Spleen (tissue), 13 donors: ENCODE measurements at regions of chr18 and their contacts with region 1.

Region 1: DNA sequence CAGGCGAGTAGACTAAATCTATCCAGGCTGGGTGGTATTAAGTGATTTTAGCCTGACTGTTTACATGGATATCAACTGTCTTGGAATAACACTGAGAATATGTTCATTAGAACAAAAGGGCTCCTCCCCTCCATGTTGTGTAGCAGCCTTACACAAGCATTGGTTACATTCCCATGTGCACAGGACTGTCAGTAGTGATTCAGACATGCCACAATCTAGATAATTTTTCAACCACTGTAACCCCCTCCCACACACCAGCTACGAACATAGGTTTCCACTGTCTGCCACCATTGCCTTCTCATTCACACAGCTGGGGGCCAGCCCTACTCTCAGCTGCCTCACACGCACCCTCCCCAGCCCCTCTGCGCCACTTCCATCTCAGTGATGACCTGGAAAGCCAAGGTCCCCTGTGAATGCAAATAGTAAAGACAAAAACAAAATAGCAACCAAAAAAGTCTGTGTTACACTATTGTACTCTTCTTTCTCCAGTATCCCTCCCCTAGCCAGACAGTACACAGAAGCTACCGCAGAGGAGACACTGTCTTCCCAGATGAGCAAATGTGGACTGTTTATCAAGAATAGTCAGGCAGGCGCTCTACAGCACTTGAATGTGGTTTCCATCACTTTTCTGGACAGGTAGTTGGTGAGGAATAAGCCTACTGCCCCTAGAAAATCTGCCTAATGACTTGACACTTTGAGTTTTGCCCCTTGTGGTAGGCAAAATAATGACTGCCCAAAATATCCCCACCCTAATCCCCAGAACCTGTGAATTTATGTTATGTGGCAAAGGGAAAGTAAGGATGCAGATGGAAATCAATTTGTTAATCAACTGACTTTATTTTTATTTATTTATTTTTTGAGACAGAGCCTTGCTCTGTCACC is 27.9 kb upstream of the TYMS start:
- DNase-seq: no peak
- H3K4me3 ChIP-seq: no peak overlapping the region
- H3K27ac ChIP-seq: no peak overlapping the region
- H3K4me1 ChIP-seq: no peaks in the 10 kb centered on the region
- H3K27me3 ChIP-seq: peaks cover 0 to 4% (median 0%) of the 10 kb centered on the region in 7 donors
- CTCF ChIP-seq: no peak
- POLR2A ChIP-seq: no peak

Region 2: GRCh38 chr18:361939-362309 is 267.6 kb before region 1 on chr18:
- intact Hi-C with region 1: no loop called
- DNase-seq: no peak
- H3K4me3 ChIP-seq: no peak overlapping the region
- H3K27ac ChIP-seq: no peak overlapping the region
- H3K4me1 ChIP-seq: peaks cover 0 to 19% (median 0%) of the 10 kb centered on the region in 6 donors
- H3K27me3 ChIP-seq: peaks cover 0 to 4% (median 0%) of the 10 kb centered on the region in 7 donors
- CTCF ChIP-seq: no peak
- POLR2A ChIP-seq: no peak

Region 3: GRCh38 chr18:830315-830901 is 200.9 kb after region 1 on chr18:
- intact Hi-C with region 1: loop called (anchors 5 kb)
- DNase-seq: no peak
- H3K4me3 ChIP-seq: peak overlapping the region in 2 of 8 donors; percentile 9 to 34
- H3K27ac ChIP-seq: peak overlapping the region; percentile 54 to 81 (median 72)
- H3K4me1 ChIP-seq: peaks cover 0 to 44% (median 24%) of the 10 kb centered on the region in 6 donors
- H3K27me3 ChIP-seq: peaks cover 0 to 41% (median 0%) of the 10 kb centered on the region in 7 donors
- CTCF ChIP-seq: no peak
- POLR2A ChIP-seq: no peak